ENCODE measurements at regions of chr9 and their contacts with region 1.

Region 1: DNA sequence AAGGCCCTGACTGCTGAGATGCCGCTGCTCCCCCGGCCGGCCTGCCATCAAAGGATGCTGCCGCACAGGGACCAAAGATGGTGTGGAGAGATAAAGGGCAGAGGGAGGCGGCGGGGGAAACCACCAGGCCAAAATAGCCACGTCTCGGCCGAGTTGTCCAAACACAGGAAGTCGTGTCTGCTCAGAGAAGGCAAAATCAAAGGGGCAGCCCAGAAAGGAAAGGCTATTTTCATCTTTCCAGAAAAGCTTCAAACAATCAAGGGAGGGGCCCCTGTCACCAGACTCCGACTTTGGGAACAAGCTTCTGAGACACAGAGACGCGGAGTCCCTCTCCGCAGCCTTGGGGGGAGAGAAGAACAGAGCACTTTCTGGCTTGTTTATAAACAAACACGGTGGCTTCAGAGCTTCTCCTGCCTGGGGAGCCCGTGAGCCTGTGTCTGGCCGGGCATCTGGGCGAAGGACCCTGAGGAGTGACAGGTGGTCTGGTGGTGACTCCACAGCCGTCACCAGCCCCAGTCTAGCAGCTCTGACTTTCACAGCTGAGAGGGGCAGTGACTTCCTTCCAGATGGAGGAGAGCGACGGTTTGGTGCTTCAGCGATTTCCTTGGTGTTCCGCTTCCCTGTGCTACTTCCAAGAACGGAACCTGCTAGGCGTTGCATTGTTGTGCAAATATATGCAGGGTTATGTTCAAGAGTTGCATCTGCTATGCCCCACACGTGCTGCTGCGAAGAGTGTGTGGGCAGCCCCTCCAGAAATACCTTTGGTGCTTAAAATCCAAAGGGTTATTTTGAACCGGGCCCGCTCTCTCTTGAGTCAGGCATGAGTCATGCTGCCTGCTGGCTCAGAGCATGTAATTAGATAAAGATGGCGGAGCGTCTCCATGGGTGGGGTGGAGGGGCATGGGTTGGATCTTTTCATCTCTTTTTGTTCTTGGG is 24.0 kb downstream of the ADAMTSL2 start:
- DNase-seq: no peak
- ATAC-seq: peak; percentile 37

Region 2: DNA sequence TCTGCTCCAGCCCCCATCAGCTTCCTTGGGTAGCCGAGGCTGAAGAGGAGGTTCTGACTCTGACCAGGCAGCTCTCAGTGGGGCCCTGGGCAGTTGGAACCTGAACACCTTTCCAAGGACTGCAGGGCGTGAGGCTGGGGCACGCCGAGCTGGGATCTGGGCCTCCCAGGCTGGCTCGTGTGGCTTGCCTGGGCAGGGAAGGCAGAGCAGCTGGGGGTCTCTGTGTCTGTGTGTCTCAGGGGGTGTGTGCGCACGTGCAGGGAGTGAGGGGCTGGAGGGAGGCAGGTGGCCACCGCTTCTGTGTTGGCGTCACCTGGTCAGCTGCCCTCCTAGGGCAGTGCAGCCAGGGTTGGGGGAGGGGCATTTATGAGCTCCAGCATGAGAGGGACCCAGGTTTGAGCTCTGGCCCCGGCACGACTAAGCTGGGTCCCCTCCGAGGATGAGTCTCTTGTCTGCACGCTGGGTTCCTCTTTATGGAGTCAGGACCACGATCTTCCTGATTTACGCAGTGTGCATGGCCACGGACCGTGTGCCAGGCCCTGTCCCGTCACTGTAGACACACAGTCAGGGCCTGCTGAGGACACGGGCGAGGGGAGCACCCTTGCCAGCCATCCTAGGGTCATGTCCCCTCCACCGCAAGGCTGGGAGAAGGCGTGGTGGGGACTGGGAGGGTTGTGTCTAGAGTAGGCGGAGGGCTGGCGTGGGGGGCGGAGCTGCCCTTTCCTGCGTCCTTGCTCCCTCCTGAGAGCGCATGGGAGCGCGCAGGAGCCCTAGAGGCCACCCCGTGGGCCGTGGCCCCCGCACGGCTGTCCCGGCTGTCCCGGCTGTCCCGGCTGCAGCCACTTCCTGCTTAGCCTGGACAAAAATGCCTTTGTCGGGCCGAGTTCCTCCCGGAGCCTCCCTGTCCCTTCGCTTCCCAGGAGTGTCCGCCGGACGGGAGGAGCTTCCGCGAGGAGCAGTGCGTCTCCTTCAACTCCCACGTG is 19.3 kb before region 1 on chr9:
- intact Hi-C with region 1: loop called (anchors 2 kb)
- DNase-seq: peak; percentile 81
- ATAC-seq: peak; percentile 74

Region 3: DNA sequence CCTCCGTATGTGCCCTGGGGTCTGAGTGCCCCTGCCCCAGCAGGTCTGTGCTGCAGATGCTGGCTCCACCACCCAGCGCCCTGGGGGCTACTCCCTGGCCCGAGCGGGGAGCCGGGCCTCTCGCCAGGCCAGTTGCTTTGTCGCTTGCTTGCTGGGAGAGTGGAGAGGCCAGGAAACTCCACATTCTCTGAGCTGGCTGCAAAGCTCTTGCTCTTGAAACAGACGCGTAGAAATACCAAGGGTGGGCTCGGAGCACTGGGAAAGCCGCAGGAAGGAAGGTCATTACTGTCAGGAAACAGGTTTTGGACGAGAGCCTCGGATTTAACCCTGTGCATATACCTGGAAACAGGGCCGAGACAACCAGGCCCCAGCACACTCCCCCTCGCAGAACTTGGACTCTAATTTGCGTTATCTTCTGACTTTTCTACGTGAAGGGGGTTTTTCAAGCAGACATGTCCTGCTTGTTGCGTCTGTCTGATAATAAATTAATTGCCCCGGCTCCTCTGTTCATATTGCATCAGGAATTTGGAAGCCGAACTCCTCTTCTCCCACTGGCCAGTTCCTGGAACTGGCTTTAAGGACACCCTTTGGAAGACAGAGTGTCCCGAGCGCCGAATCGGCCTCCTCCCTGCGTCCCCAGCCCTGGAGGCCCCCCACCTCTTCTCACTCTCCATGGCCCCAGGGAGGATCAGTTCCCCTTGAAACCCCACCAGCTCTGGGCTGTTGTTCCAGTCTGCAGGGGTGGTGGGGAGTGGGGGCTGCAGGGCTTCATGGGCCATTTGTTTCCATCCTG is 12.8 kb before region 1 on chr9:
- intact Hi-C with region 1: loop called (anchors 1 kb)
- DNase-seq: no peak
- ATAC-seq: peak; percentile 73